ENCODE measurements at regions of chr1 and their contacts with region 1.

Region 1: DNA sequence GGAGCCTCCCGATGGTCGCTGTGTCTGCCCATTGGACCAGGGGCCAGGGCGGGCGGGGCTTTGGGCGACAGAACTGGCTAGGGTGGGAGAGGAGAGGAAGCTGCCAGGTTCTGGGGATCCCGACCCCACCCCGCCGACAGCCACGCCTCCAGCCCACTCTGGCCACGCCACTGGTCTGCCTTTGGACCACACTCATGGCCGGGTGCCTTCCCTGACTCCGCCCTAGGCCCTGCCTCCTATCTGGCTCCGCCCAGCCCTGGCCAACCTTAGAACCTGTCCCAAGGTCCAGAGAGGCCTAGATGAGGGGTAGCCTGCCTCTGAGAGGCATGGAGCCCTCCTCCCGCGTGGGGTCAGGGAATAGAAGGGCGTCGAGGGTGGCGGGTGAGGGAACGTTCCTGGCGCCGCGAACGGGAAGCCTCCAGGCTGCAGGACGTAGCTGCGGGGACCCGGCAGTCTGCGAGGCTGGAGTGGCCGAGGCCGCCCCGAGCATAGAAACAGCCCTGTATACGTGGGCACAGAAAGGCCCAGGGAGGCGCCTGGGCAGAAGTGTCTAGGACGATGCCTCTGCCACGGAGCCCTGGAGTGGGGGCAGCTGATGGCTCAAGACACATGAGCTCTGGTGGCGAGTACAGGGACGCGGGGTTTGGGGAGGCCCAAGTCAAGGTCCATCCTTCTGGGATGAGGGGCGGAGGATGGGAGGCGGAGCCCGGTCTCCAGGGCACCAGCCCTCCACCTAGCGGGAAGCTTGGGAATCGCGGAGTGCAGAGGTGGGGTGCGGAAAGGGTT is 11.5 kb upstream of the COL16A1 start:
- DNase-seq: peak; percentile 88 to 94
- ATAC-seq: peak; percentile 89
- H3K4me3 ChIP-seq: peak overlapping the region; percentile 50 to 80 (median 64)
- H3K27ac ChIP-seq: peak overlapping the region; percentile 84 to 97 (median 94)
- H3K4me1 ChIP-seq: peaks cover 4 to 22% of the 10 kb centered on the region in 2 donors
- H3K27me3 ChIP-seq: no peaks in the 10 kb centered on the region
- CTCF ChIP-seq: peak; percentile 79 to 93 (median 88)
- POLR2A ChIP-seq: peak; percentile 74 to 88

Region 2: GRCh38 chr1:31535561-31535960 is 179.7 kb before region 1 on chr1:
- in situ Hi-C with region 1: no loop called
- intact Hi-C with region 1: no loop called
- DNase-seq: no peak
- ATAC-seq: no peak
- H3K4me3 ChIP-seq: no peak overlapping the region
- H3K27ac ChIP-seq: no peak overlapping the region
- H3K4me1 ChIP-seq: no peaks in the 10 kb centered on the region
- H3K27me3 ChIP-seq: peaks cover 0 to 2% (median 0%) of the 10 kb centered on the region in 3 donors
- CTCF ChIP-seq: no peak
- POLR2A ChIP-seq: no peak

Region 3: DNA sequence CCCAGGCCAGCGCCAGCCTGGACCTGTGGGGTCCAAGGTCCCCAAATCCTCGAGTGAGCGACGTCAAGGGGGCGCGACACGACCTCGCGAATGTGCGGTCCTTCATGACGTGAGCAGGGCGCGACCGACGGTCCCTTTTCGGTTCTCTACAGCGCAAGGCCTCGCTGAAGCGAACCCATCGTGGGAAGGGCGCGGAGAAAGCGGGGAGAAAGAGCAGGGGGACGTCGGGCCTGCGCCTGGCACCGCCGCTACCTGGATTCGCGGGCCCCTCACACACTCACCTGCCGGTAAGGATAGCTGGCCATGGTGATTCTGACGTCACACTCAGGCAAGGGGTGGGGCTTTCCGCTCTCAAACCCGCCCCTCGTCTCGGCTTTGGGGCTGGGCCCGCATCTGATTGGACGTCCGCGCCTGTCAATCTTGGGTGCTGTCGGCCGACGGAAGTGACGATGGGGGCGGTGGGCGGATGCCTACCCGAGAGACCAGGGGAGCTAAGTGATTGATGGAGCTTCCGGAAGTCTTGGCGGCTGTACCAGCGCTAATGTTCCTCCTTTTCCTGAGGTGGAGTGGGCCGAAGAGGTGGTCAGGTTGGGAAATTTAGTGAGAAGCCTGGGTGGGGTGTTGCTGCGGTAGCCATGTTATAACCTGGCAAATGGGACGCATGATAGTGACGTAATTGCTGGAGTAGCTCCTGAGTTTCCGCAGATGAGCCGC is 70.6 kb before region 1 on chr1 and contains the start of gene PEF1:
- in situ Hi-C with region 1: no loop called
- intact Hi-C with region 1: loop called (anchors 1 kb)
- DNase-seq: peak; percentile 98 to 99
- ATAC-seq: peak; percentile 87 to 90
- H3K4me3 ChIP-seq: peak within 1 kb of the TSS; percentile 72 to 96 (median 79)
- H3K27ac ChIP-seq: peak within 1 kb of the TSS; percentile 87 to 99 (median 96)
- H3K4me1 ChIP-seq: peaks cover 48 to 54% of the 10 kb centered on the region in 2 donors
- H3K27me3 ChIP-seq: no peaks in the 10 kb centered on the region
- CTCF ChIP-seq: peak in 2 of 5 experiments; percentile 26 to 35
- POLR2A ChIP-seq: peak; percentile 77 to 80
- total RNA-seq, gene PEF1: 29.5 to 53.1 (median 42.7) TPM

Region 4: GRCh38 chr1:31663622-31664452 is 51.4 kb before region 1 on chr1:
- in situ Hi-C with region 1: loop called in 1 of 4 experiments (anchors 10 kb)
- intact Hi-C with region 1: loop called (anchors 1 kb)
- DNase-seq: peak in 1 of 2 donors; percentile 37
- ATAC-seq: peak; percentile 53 to 57
- H3K4me3 ChIP-seq: no peak overlapping the region
- H3K27ac ChIP-seq: no peak overlapping the region
- H3K4me1 ChIP-seq: no peaks in the 10 kb centered on the region
- H3K27me3 ChIP-seq: no peaks in the 10 kb centered on the region
- CTCF ChIP-seq: peak; percentile 88 to 96 (median 94)
- POLR2A ChIP-seq: no peak

Region 5: DNA sequence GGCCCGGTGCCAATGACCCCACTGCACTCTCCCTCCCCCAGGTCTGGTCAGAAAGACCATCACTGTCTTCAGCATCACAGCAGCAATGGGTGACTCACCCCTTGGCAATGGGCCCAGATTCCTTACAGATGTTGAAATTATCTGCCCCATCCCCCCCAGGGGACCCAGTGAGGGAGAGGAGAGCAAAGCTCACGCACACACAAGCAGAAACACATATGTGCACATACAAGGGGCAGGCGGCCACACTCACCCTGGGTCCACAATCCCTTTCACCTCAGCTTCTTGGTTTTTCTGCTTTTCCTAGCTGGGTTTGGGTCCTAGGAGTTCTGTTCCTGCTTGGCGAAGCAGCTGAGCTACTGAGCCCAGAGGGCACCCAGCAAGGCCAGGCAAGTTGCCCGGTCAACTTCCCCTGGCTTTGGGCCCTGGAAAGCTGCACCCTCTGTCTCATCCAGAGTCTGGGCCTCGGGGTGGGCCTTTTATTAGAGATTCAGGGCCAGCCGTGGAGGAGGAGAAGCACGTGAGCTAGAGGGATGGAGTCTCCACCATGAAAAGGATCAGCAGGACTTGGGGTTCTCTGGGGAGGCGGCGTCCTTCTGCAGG is 14.0 kb before region 1 on chr1:
- in situ Hi-C with region 1: no loop called
- intact Hi-C with region 1: loop called (anchors 2 kb)
- DNase-seq: peak; percentile 71 to 86
- ATAC-seq: peak; percentile 45 to 65
- H3K4me3 ChIP-seq: no peak overlapping the region
- H3K27ac ChIP-seq: peak overlapping the region; percentile 58 to 70 (median 66)
- H3K4me1 ChIP-seq: peaks cover 14 to 36% of the 10 kb centered on the region in 2 donors
- H3K27me3 ChIP-seq: no peaks in the 10 kb centered on the region
- CTCF ChIP-seq: no peak
- POLR2A ChIP-seq: no peak

Region 6: GRCh38 chr1:31753707-31754349 is 38.5 kb after region 1 on chr1:
- in situ Hi-C with region 1: no loop called
- intact Hi-C with region 1: loop called (anchors 2 kb)
- DNase-seq: peak in 1 of 2 donors; percentile 54
- ATAC-seq: peak in 1 of 2 donors; percentile 63
- H3K4me3 ChIP-seq: no peak overlapping the region
- H3K27ac ChIP-seq: peak overlapping the region in 1 of 4 donors; percentile 65
- H3K4me1 ChIP-seq: peaks cover 16 to 45% of the 10 kb centered on the region in 2 donors
- H3K27me3 ChIP-seq: no peaks in the 10 kb centered on the region
- CTCF ChIP-seq: no peak
- POLR2A ChIP-seq: no peak

Region 7: DNA sequence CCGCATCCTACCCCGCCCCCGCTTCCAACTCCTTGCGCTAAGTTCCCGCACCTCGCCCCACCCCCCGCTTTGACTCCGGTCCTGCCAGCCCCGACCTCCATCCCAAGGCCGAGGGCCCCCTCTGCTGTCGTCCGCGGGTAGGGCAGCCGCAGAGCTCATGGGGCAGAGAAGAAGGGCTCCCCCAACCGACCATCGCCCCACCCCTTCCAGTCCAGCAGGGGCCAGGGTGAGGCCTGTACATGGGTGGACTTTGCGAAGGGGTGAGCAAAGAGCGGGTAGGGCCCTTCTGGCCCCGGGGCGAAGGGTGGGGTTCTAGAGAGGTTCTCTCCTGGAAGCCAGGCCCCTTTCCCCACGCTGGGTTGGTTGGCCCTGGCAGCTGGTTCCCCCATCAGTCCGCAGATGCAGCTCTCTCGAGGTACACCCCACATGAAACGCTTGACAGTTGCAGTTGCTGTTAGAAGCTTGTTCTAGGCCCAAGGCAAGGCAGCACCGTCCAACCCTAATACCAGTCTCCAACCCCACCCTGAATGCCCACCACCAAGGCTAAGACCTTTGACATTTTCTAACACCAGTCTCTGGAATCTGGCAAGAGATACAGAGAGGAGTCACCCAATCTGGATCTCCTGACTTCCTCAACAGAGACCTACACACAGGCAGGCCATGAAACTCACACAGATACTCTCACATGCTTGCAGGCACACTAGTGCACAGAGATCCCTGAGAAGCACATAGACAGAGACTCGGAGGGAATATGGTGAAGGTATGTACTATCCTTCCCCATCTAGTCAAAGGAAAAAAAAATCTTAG is 74.2 kb after region 1 on chr1:
- in situ Hi-C with region 1: no loop called
- intact Hi-C with region 1: loop called (anchors 1 kb)
- DNase-seq: peak; percentile 83 to 88
- ATAC-seq: peak; percentile 79 to 80
- H3K4me3 ChIP-seq: peak overlapping the region; percentile 62 to 96 (median 68)
- H3K27ac ChIP-seq: peak overlapping the region; percentile 66 to 76 (median 74)
- H3K4me1 ChIP-seq: peaks cover 2 to 8% of the 10 kb centered on the region in 2 donors
- H3K27me3 ChIP-seq: no peaks in the 10 kb centered on the region
- CTCF ChIP-seq: peak; percentile 86 to 98 (median 93)
- POLR2A ChIP-seq: no peak

Measured in gastrocnemius medialis (tissue), 4 donors.